T-cell (primary cell): ENCODE measurements at regions of chr15 and their contacts with region 1.

Region 1: GRCh38 chr15:44663409-44664308 is at the start of gene SPG11:
- DNase-seq: peak; percentile 91 to 98 (median 95)
- ATAC-seq: peak; percentile 80 to 86 (median 82)
- H3K4me3 ChIP-seq: peak within 1 kb of the TSS; percentile 86 to 90
- H3K4me3 Mint-ChIP-seq: peak within 1 kb of the TSS; percentile 90 to 95 (median 93)
- H3K27ac ChIP-seq: peak within 1 kb of the TSS; percentile 93
- H3K27ac Mint-ChIP-seq: peak within 1 kb of the TSS; percentile 94 to 96
- H3K4me1 ChIP-seq: peaks cover 49 to 56% of the 10 kb centered on the region in 2 experiments
- H3K4me1 Mint-ChIP-seq: peaks cover 65 to 70% (median 68%) of the 10 kb centered on the region in 3 donors
- H3K27me3 ChIP-seq: no peaks in the 10 kb centered on the region
- H3K27me3 Mint-ChIP-seq: no peaks in the 10 kb centered on the region
- total RNA-seq, gene SPG11: 108 to 124 (median 118) TPM

Region 2: GRCh38 chr15:44606740-44607139 is 56.9 kb before region 1 on chr15:
- CTCF ChIA-PET with region 1: no interaction called
- POLR2A ChIA-PET with region 1: no interaction called
- DNase-seq: no peak
- ATAC-seq: no peak
- H3K4me3 ChIP-seq: no peak overlapping the region
- H3K4me3 Mint-ChIP-seq: no peak overlapping the region
- H3K27ac ChIP-seq: no peak overlapping the region
- H3K27ac Mint-ChIP-seq: peak overlapping the region in 1 of 2 donors; percentile 7
- H3K4me1 ChIP-seq: no peaks in the 10 kb centered on the region
- H3K4me1 Mint-ChIP-seq: no peaks in the 10 kb centered on the region
- H3K27me3 ChIP-seq: no peaks in the 10 kb centered on the region
- H3K27me3 Mint-ChIP-seq: no peaks in the 10 kb centered on the region

Region 3: DNA sequence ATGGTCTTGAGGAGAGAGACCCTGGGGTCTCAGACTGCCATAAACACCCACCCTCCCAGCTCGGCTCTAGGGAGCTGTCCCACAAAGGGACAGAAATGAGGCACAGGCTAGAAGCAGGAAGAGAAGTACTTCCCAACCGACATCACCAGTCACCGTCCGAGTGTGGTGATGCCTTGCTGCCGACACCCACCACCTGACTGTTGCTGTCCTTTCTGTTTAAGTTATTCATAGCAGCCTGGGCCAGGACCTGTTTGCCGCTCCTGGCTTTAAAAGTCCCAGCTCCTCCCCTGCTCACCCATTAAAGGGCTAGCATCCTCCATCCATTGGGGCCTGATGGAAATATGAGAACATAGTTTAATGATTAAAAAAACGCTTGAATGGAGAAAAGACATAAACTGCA is 13.0 kb after region 1 on chr15:
- CTCF ChIA-PET with region 1: interaction called in 1 of 2 experiments, 33 read pairs
- POLR2A ChIA-PET with region 1: interaction called, 5 to 16 read pairs
- DNase-seq: peak in 2 of 35 experiments; percentile 11 to 53
- ATAC-seq: peak in 3 of 4 experiments; percentile 11 to 18 (median 16)
- H3K4me3 ChIP-seq: peak overlapping the region; percentile 24 to 26
- H3K4me3 Mint-ChIP-seq: peak overlapping the region; percentile 58 to 69 (median 58)
- H3K27ac ChIP-seq: peak overlapping the region; percentile 82
- H3K27ac Mint-ChIP-seq: peak overlapping the region; percentile 96 to 98
- H3K4me1 ChIP-seq: peaks cover 60 to 98% of the 10 kb centered on the region in 2 experiments
- H3K4me1 Mint-ChIP-seq: peaks cover 88 to 92% (median 91%) of the 10 kb centered on the region in 3 donors
- H3K27me3 ChIP-seq: no peaks in the 10 kb centered on the region
- H3K27me3 Mint-ChIP-seq: no peaks in the 10 kb centered on the region

Region 4: GRCh38 chr15:44682211-44682610 is 18.6 kb after region 1 on chr15:
- CTCF ChIA-PET with region 1: interaction called, 4 to 33 read pairs
- POLR2A ChIA-PET with region 1: interaction called, 5 to 16 read pairs
- DNase-seq: no peak
- ATAC-seq: no peak
- H3K4me3 ChIP-seq: no peak overlapping the region
- H3K4me3 Mint-ChIP-seq: peak overlapping the region; percentile 43 to 81 (median 62)
- H3K27ac ChIP-seq: peak overlapping the region; percentile 89
- H3K27ac Mint-ChIP-seq: peak overlapping the region; percentile 96 to 97
- H3K4me1 ChIP-seq: peaks cover 42 to 71% of the 10 kb centered on the region in 2 experiments
- H3K4me1 Mint-ChIP-seq: peaks cover 88 to 92% (median 92%) of the 10 kb centered on the region in 3 donors
- H3K27me3 ChIP-seq: no peaks in the 10 kb centered on the region
- H3K27me3 Mint-ChIP-seq: no peaks in the 10 kb centered on the region

Region 5: GRCh38 chr15:44719293-44719999 is 55.8 kb after region 1 on chr15:
- CTCF ChIA-PET with region 1: interaction called, 3 to 160 read pairs
- POLR2A ChIA-PET with region 1: interaction called, 5 to 14 read pairs
- DNase-seq: peak in 30 of 35 experiments; percentile 34 to 81 (median 50)
- ATAC-seq: peak; percentile 48 to 63 (median 60)
- H3K4me3 ChIP-seq: no peak overlapping the region
- H3K4me3 Mint-ChIP-seq: peak overlapping the region; percentile 61 to 100 (median 67)
- H3K27ac ChIP-seq: peak overlapping the region; percentile 99
- H3K27ac Mint-ChIP-seq: peak overlapping the region; percentile 94 to 97
- H3K4me1 ChIP-seq: peaks cover 61 to 85% of the 10 kb centered on the region in 2 experiments
- H3K4me1 Mint-ChIP-seq: peaks cover 90 to 93% (median 92%) of the 10 kb centered on the region in 3 donors
- H3K27me3 ChIP-seq: no peaks in the 10 kb centered on the region
- H3K27me3 Mint-ChIP-seq: no peaks in the 10 kb centered on the region

Region 6: GRCh38 chr15:44728576-44729407 is 65.1 kb after region 1 on chr15:
- CTCF ChIA-PET with region 1: interaction called, 4 to 45 read pairs
- POLR2A ChIA-PET with region 1: interaction called, 8 to 37 read pairs
- DNase-seq: peak; percentile 86 to 98 (median 95)
- ATAC-seq: peak; percentile 80 to 84 (median 81)
- H3K4me3 ChIP-seq: peak overlapping the region; percentile 71 to 79
- H3K4me3 Mint-ChIP-seq: peak overlapping the region; percentile 94 to 100 (median 100)
- H3K27ac ChIP-seq: peak overlapping the region; percentile 99
- H3K27ac Mint-ChIP-seq: peak overlapping the region; percentile 99 to 100
- H3K4me1 ChIP-seq: peaks cover 38 to 75% of the 10 kb centered on the region in 2 experiments
- H3K4me1 Mint-ChIP-seq: peaks cover 71 to 83% (median 79%) of the 10 kb centered on the region in 3 donors
- H3K27me3 ChIP-seq: no peaks in the 10 kb centered on the region
- H3K27me3 Mint-ChIP-seq: no peaks in the 10 kb centered on the region

Region 7: GRCh38 chr15:44738340-44738984 is 74.8 kb after region 1 on chr15:
- CTCF ChIA-PET with region 1: interaction called, 7 to 116 read pairs
- POLR2A ChIA-PET with region 1: interaction called, 5 to 32 read pairs
- DNase-seq: peak in 1 of 35 experiments; percentile 74
- ATAC-seq: no peak
- H3K4me3 ChIP-seq: no peak overlapping the region
- H3K4me3 Mint-ChIP-seq: peak overlapping the region in 2 of 3 donors; percentile 14 to 51
- H3K27ac ChIP-seq: peak overlapping the region; percentile 89
- H3K27ac Mint-ChIP-seq: peak overlapping the region; percentile 80 to 84
- H3K4me1 ChIP-seq: peaks cover 7 to 43% of the 10 kb centered on the region in 2 experiments
- H3K4me1 Mint-ChIP-seq: peaks cover 55 to 59% (median 58%) of the 10 kb centered on the region in 3 donors
- H3K27me3 ChIP-seq: no peaks in the 10 kb centered on the region
- H3K27me3 Mint-ChIP-seq: no peaks in the 10 kb centered on the region

Region 8: DNA sequence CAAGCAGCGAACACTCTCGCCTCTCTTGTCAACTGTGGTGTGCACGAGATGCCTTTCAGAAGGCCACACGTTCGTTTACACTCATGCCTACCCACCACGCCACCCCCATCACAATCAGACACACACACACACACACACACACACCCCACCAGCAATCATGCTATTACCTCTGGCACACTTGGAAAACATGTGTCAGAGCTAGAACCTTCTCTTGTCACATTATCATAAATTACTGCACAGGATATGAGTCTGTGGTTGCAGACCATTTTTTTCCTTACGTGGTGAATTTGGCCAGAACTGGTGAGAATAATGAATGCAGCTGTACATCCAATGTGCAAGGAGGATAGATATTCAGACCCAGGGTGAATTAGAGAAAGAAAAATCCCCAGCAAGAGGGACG is 125.1 kb after region 1 on chr15:
- CTCF ChIA-PET with region 1: interaction called in 1 of 2 experiments, 13 read pairs
- POLR2A ChIA-PET with region 1: no interaction called
- DNase-seq: peak in 2 of 35 experiments; percentile 7 to 12
- ATAC-seq: no peak
- H3K4me3 ChIP-seq: no peak overlapping the region
- H3K4me3 Mint-ChIP-seq: no peak overlapping the region
- H3K27ac ChIP-seq: no peak overlapping the region
- H3K27ac Mint-ChIP-seq: no peak overlapping the region
- H3K4me1 ChIP-seq: peaks cover 0 to 11% of the 10 kb centered on the region in 2 experiments
- H3K4me1 Mint-ChIP-seq: peaks cover 8 to 15% (median 11%) of the 10 kb centered on the region in 3 donors
- H3K27me3 ChIP-seq: no peaks in the 10 kb centered on the region
- H3K27me3 Mint-ChIP-seq: no peaks in the 10 kb centered on the region